ENCODE measurements at regions of chr12 and their contacts with region 1.

Region 1: DNA sequence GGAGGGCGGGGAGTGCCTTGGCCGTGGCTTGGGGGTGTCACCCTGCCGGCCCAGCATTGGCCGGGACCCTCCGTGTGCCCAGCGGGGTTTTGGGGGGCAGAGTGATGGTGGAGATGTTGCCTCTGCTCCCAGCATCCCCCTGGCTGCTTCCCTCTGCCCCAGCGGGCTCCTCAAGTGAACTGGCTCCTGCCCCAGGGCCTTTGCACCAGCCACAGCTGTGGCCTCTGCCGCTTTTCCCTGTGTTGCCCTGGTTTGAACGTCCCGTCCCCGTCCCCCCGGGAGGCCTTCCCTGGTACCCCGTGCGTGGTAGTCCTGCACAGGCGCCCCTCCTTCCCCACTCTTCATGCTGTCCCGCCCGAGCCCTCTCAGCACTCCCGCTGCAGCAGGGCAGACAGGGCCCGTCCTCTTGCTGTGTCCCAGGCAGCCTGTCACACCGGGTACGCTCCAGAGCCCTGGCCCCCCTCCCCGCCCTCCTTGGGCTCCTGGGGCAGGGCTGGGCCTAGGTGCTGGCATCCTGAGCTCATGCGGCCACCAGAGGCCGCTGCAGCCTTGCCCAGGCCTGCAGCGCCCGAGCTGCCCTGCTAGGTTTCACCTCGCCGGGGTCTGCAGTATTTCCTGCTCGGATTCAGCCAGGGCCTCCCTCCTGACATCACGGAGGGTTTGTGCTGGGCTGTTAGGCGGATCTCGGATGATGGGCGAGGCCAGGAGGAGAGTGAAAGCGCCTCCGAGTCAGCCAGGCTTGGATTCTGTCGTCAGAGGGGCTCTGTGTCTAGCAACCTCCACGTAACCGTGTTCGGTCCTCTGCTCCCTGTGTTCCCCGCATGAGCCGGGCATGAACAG is 9.5 kb downstream of the NOC4L start:
- DNase-seq: peak; percentile 55 to 82
- H3K4me3 ChIP-seq: no peak overlapping the region
- H3K4me1 ChIP-seq: no peaks in the 10 kb centered on the region
- H3K27me3 ChIP-seq: no peaks in the 10 kb centered on the region

Region 2: DNA sequence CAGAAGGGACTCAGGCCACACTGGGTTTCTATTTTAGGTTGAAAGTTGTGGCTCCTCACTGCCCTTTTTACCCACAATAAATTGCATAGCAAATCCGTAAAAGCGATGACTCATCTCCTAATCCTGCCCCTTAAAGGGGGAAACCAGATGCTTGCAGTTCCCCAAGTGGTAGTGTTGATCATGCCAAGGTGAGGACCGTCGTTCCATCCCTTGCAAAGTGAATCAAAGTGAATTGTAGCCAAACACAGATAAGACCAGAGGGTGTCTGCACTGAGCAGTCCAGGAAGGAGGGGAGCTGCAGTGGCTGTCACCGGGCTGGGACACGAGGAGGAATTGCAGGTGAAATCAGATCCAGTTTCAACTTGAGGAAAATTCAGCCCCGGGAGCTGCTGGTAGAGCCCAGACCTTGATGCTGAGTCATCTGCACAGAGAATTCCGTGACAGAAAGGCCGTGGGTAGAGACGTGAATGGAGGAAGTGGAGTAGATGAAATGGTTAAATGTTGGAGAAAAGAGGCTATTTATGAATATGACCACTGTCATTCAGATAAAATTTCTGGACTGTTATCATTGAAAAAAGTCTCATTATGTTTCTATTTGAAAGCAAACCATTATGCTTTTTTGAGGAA is 369.7 kb before region 1 on chr12:
- in situ Hi-C with region 1: no loop called
- DNase-seq: peak; percentile 70 to 81
- H3K4me3 ChIP-seq: peak overlapping the region; percentile 2; the same call in 1 of the 2 replicates
- H3K4me1 ChIP-seq: peaks cover 26% of the 10 kb centered on the region
- H3K27me3 ChIP-seq: no peaks in the 10 kb centered on the region

Region 3: GRCh38 chr12:132018193-132018916 is 135.4 kb before region 1 on chr12:
- in situ Hi-C with region 1: no loop called
- DNase-seq: no peak
- H3K4me3 ChIP-seq: no peak overlapping the region
- H3K4me1 ChIP-seq: no peaks in the 10 kb centered on the region
- H3K27me3 ChIP-seq: no peaks in the 10 kb centered on the region

Region 4: DNA sequence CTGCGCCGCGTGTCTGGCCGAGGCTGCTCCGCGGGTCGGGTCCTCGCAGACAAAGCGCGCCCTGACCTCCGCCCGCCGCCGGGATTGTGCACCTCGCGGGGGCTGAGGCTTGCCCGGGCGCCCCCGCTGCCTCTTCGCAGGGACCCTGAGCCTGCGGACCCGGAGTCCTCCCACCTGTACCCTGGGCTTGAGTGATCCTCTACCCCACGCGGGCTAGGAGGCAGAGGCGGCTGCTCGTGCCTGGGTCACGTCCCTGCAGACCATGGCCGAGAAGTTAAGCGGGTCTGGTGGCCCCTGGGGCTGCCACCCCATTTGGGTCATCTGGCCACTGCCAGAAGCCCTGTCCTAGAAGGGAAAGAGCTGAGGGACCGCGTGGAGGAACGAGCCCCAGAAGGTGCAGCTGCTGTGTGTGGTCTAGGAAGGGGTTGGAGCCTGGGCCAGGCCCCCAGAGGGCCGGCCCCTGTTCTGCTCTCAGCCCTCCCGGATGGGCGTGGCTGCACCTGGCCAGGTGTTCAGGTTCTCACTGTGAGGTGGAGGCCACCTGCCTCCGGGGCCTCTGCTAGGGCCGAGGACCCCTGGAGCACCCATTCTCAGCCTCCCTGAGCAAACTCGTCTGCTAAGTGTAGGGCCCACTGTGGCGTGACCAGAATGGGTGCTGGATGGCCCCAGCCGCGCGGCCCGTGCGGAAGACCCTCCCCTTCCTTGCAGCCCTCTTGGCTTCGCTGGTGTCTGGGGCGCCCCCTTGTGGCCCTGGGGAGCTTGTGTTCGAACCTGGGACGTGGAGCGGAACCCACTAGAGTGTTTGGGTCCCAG is 407.1 kb after region 1 on chr12:
- in situ Hi-C with region 1: loop called (anchors 25 kb)
- DNase-seq: peak; percentile 64 to 94
- H3K4me3 ChIP-seq: peak overlapping the region; percentile 60
- H3K4me1 ChIP-seq: no peaks in the 10 kb centered on the region
- H3K27me3 ChIP-seq: no peaks in the 10 kb centered on the region